ENCODE measurements at regions of chr2 and their contacts with region 1.

Region 1: GRCh38 chr2:47534179-47534919 is 131.4 kb downstream of the MSH2 start:
- DNase-seq: no peak
- ATAC-seq: no peak

Region 2: GRCh38 chr2:47155091-47155876 is 379.1 kb before region 1 on chr2 and contains the start of gene STPG4:
- intact Hi-C with region 1: no loop called
- DNase-seq: no peak
- ATAC-seq: no peak
- total RNA-seq, gene STPG4: 0.89 TPM

Region 3: DNA sequence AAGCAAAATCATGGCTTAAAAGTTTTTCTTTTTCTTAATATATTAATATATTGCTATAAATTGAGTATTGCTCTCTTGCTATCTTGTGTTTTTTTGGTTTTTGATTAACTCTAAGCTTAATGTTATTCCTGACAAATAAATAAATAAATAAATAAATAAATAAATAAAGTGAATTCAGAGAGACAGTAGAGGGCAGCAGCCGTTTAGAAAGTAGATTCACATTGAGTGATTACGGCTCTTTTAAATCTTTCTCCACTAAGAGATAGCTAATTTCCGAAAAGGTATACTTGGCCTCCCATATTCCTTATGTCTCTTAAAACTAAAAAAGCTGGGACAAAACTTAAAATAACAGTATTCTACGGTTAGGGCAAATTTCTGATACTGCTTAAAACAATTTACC is 97.1 kb before region 1 on chr2:
- intact Hi-C with region 1: no loop called
- DNase-seq: no peak
- ATAC-seq: peak; percentile 62

Region 4: DNA sequence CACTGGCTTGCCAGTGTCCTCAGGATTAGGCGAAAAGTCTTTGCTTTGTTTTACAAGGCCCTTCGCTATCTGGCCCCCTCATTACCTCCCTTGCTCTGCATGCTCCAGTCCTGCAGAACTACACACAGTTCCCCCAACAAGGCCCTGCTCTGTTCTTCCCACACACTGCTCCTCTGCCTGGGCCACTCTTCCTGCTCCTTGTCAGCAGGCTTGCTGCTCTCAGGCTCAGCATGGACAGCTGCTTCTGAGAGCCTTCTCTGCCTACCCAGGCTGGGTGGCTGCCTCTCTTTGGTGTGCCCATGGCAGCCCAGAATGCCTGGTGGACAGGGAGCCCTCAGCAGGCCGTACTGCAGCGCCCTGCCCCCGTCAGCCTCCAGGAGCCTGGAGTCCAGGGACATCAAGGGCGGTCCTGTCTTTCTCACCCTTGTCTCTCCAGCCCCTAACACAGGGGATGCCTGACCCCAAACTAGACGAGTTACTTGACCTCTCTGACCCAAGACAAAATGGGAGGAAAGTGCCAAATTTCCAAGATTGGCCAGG is 20.3 kb before region 1 on chr2:
- intact Hi-C with region 1: loop called (anchors 2 kb)
- DNase-seq: no peak
- ATAC-seq: peak; percentile 47

Region 5: GRCh38 chr2:47602996-47603395 is 68.6 kb after region 1 on chr2:
- intact Hi-C with region 1: no loop called
- DNase-seq: no peak
- ATAC-seq: no peak

Region 6: GRCh38 chr2:48328159-48328809 is 793.9 kb after region 1 on chr2:
- intact Hi-C with region 1: loop called (anchors 10 kb)
- DNase-seq: no peak
- ATAC-seq: no peak